ENCODE measurements at regions of chr9 and their contacts with region 1.

Region 1: GRCh38 chr9:72022841-72023240 is 37.6 kb downstream of the C9orf57 start:
- DNase-seq: no peak
- ATAC-seq: no peak
- H3K4me3 ChIP-seq: no peak overlapping the region
- H3K27ac ChIP-seq: no peak overlapping the region
- H3K4me1 ChIP-seq: no peaks in the 10 kb centered on the region
- H3K27me3 ChIP-seq: no peaks in the 10 kb centered on the region
- CTCF ChIP-seq: no peak
- EP300 ChIP-seq: no peak
- POLR2A ChIP-seq: no peak
- RAD21 ChIP-seq: no peak

Region 2: GRCh38 chr9:71285191-71285656 is 737.6 kb before region 1 on chr9:
- CTCF ChIA-PET with region 1: interaction called, 27 read pairs
- POLR2A ChIA-PET with region 1: no interaction called
- RAD21 ChIA-PET with region 1: interaction called, 5 read pairs
- SMC1A ChIA-PET with region 1: interaction called, 3 read pairs
- in situ Hi-C with region 1: loop called (anchors 25 kb)
- intact Hi-C with region 1: no loop called
- DNase-seq: no peak
- ATAC-seq: peak; percentile 94
- H3K4me3 ChIP-seq: no peak overlapping the region
- H3K27ac ChIP-seq: no peak overlapping the region
- H3K4me1 ChIP-seq: no peaks in the 10 kb centered on the region
- H3K27me3 ChIP-seq: no peaks in the 10 kb centered on the region
- CTCF ChIP-seq: peak; percentile 84 to 93 (median 90)
- EP300 ChIP-seq: no peak
- POLR2A ChIP-seq: no peak
- RAD21 ChIP-seq: peak; percentile 97

Region 3: GRCh38 chr9:71725590-71726338 is 297.1 kb before region 1 on chr9:
- CTCF ChIA-PET with region 1: no interaction called
- POLR2A ChIA-PET with region 1: no interaction called
- RAD21 ChIA-PET with region 1: no interaction called
- SMC1A ChIA-PET with region 1: no interaction called
- in situ Hi-C with region 1: no loop called
- intact Hi-C with region 1: no loop called
- DNase-seq: no peak
- ATAC-seq: no peak
- H3K4me3 ChIP-seq: no peak overlapping the region
- H3K27ac ChIP-seq: no peak overlapping the region
- H3K4me1 ChIP-seq: no peaks in the 10 kb centered on the region
- H3K27me3 ChIP-seq: no peaks in the 10 kb centered on the region
- CTCF ChIP-seq: no peak
- EP300 ChIP-seq: no peak
- POLR2A ChIP-seq: no peak
- RAD21 ChIP-seq: no peak

Region 4: GRCh38 chr9:71778085-71778484 is 244.8 kb before region 1 on chr9:
- CTCF ChIA-PET with region 1: interaction called, 11 read pairs
- POLR2A ChIA-PET with region 1: no interaction called
- RAD21 ChIA-PET with region 1: interaction called, 13 read pairs
- SMC1A ChIA-PET with region 1: interaction called, 5 read pairs
- in situ Hi-C with region 1: no loop called
- intact Hi-C with region 1: no loop called
- DNase-seq: no peak
- ATAC-seq: no peak
- H3K4me3 ChIP-seq: no peak overlapping the region
- H3K27ac ChIP-seq: no peak overlapping the region
- H3K4me1 ChIP-seq: peaks cover 18% of the 10 kb centered on the region
- H3K27me3 ChIP-seq: no peaks in the 10 kb centered on the region
- CTCF ChIP-seq: no peak
- EP300 ChIP-seq: no peak
- POLR2A ChIP-seq: no peak
- RAD21 ChIP-seq: no peak

Region 5: GRCh38 chr9:71806901-71807307 is 215.9 kb before region 1 on chr9:
- CTCF ChIA-PET with region 1: interaction called, 213 read pairs
- POLR2A ChIA-PET with region 1: no interaction called
- RAD21 ChIA-PET with region 1: interaction called, 85 read pairs
- SMC1A ChIA-PET with region 1: interaction called, 93 read pairs
- in situ Hi-C with region 1: loop called (anchors 5 kb)
- intact Hi-C with region 1: loop called (anchors 1 kb)
- DNase-seq: no peak
- ATAC-seq: peak; percentile 100
- H3K4me3 ChIP-seq: no peak overlapping the region
- H3K27ac ChIP-seq: no peak overlapping the region
- H3K4me1 ChIP-seq: no peaks in the 10 kb centered on the region
- H3K27me3 ChIP-seq: no peaks in the 10 kb centered on the region
- CTCF ChIP-seq: peak; percentile 85 to 94 (median 91)
- EP300 ChIP-seq: no peak
- POLR2A ChIP-seq: no peak
- RAD21 ChIP-seq: peak; percentile 94

Region 6: DNA sequence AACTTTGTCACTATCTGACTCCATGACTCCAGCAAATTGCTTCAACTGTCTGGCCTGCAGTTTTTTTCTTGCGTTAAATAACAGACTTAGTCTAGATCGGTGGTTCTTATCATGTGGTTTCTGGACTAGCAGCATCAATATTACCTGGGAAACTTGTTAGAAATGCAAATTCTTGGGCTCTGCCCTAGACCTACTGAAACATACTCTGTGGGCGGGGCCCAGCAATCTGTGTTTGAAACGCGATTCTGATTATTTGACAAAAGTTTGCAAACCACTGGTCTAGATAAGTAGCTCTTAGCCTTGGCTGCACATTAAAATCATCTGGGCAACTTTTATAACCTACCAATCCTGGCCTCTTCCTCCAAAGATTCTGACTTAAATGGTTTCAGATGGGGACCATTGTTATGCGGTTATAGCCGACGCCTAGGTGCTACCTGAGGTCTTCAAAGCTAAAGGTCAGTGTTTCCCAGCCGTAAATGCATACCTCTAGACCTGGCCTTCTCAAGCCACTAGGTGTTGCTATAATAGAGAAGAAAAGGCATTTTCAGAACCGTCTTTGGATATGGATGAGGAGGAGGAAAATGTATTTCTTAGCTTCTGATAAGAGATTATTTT is 37.4 kb before region 1 on chr9:
- CTCF ChIA-PET with region 1: interaction called, 9 read pairs
- POLR2A ChIA-PET with region 1: no interaction called
- RAD21 ChIA-PET with region 1: no interaction called
- SMC1A ChIA-PET with region 1: interaction called, 5 read pairs
- in situ Hi-C with region 1: no loop called
- intact Hi-C with region 1: loop called (anchors 5 kb)
- DNase-seq: no peak
- ATAC-seq: no peak
- H3K4me3 ChIP-seq: no peak overlapping the region
- H3K27ac ChIP-seq: no peak overlapping the region
- H3K4me1 ChIP-seq: no peaks in the 10 kb centered on the region
- H3K27me3 ChIP-seq: no peaks in the 10 kb centered on the region
- CTCF ChIP-seq: no peak
- EP300 ChIP-seq: no peak
- POLR2A ChIP-seq: no peak
- RAD21 ChIP-seq: no peak

Region 7: DNA sequence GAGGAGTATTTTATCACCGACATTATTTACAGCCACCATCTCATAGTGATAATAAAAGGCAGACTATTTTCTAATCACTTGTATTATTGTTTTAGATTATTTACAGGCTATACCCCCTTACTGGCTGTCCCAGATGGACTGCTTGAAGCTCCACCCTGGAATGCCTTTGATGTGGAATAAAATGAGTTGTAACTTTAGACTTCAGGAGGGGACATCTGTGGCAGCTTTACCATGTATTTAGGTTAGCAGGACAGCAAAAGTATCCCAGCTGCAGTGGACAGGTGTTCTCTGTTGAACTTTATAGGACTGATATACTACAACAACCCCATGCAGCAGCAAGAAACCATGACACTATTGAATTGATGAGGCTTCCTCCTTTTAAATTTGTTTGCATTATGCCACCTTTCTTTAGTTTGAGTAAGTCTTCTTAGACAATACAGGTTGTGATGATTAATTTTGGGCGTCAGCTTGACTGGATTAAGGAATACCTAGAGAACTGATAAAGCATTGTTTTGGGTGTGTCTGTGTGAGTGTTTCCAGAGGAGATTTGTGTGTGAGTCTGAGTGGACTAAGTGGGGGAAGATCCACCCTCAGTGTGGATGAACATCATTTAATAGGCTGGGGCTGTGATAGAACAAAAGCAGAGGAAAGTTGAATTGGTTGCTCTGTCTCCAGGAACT is 66.8 kb after region 1 on chr9:
- CTCF ChIA-PET with region 1: no interaction called
- POLR2A ChIA-PET with region 1: no interaction called
- RAD21 ChIA-PET with region 1: no interaction called
- SMC1A ChIA-PET with region 1: no interaction called
- in situ Hi-C with region 1: no loop called
- intact Hi-C with region 1: no loop called
- DNase-seq: no peak
- ATAC-seq: no peak
- H3K4me3 ChIP-seq: no peak overlapping the region
- H3K27ac ChIP-seq: no peak overlapping the region
- H3K4me1 ChIP-seq: no peaks in the 10 kb centered on the region
- H3K27me3 ChIP-seq: no peaks in the 10 kb centered on the region
- CTCF ChIP-seq: no peak
- EP300 ChIP-seq: no peak
- POLR2A ChIP-seq: no peak
- RAD21 ChIP-seq: no peak

Measured in GM12878 (cell line).